PC-3 (cell line): ENCODE measurements at regions of chr20 and their contacts with region 1.

Region 1: DNA sequence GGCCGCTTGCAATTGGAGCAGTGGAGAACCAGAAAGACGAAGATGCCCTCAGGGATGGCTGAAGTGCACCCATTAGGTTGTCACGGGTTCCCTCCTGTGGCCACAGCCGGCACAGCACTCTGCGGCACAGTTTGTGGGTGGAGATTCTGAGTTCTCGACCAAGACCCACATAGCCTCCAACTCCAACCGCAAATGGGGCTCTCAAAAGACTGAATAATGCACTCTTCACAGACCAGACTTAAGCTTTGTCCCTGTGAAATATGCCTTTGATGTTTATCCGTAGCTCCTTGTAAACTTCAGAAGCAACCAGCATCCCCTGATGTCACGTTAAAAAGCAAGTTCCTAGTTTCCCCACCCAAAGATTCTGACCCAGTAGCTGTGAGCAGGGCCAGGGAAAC is 934 bp upstream of the CST9 start:
- DNase-seq: peak; percentile 88
- ATAC-seq: peak; percentile 95
- H3K4me3 ChIP-seq: no peak overlapping the region
- H3K27ac ChIP-seq: no peak overlapping the region
- H3K4me1 ChIP-seq: no peaks in the 10 kb centered on the region
- H3K27me3 ChIP-seq: peaks cover 14% of the 10 kb centered on the region
- CTCF ChIP-seq: peak; percentile 95

Region 2: DNA sequence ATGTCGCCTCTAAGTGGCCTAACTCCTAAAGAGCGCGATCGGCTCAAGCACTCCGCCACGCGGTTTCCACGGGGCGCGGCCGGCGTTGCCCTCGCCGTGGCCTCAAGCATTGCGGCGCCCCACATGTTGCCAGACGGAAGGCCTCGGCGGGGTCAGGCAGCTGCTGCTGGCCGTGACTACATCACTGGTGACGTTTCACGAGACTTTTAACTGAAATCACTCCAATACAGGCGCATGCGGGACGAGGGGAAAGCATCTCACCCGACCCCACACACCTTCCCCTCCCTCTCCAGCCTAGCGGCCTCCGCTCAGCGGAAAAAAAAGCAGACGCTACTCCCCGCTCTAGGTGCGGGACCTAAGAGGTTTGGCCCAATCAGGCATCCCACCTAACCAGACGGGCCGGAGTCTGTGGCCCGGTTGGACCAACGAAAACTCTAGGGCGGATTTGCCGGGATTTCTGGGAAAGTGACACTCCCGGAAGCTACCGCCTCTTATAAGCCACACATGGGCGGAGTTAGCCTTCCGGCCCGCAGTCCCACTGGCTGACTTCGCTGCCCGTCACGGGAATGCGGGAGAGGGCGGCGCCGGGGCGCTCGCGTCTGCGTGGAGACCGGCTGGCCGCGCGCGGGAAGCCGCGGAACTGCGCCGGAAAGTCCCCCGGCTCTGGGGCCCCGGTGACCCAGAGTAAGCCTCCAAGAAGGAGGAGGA is 256.3 kb before region 1 on chr20 and contains the start of gene NXT1:
- CTCF ChIA-PET with region 1: no interaction called
- POLR2A ChIA-PET with region 1: no interaction called
- intact Hi-C with region 1: loop called (anchors 2 kb)
- DNase-seq: peak; percentile 99
- ATAC-seq: peak; percentile 87
- H3K4me3 ChIP-seq: peak within 1 kb of the TSS; percentile 89
- H3K27ac ChIP-seq: peak within 1 kb of the TSS; percentile 87
- H3K4me1 ChIP-seq: peaks cover 18% of the 10 kb centered on the region
- H3K27me3 ChIP-seq: no peaks in the 10 kb centered on the region
- CTCF ChIP-seq: no peak
- total RNA-seq, gene NXT1: 82.0 and 98.0 TPM in 2 replicates

Region 3: GRCh38 chr20:23441850-23442313 is 164.8 kb before region 1 on chr20:
- CTCF ChIA-PET with region 1: interaction called, 3 read pairs
- POLR2A ChIA-PET with region 1: no interaction called
- intact Hi-C with region 1: loop called (anchors 1 kb)
- DNase-seq: peak; percentile 94
- ATAC-seq: peak; percentile 87
- H3K4me3 ChIP-seq: no peak overlapping the region
- H3K27ac ChIP-seq: no peak overlapping the region
- H3K4me1 ChIP-seq: peaks cover 10% of the 10 kb centered on the region
- H3K27me3 ChIP-seq: no peaks in the 10 kb centered on the region; the same call in 1 of the 2 replicates
- CTCF ChIP-seq: peak; percentile 97